Upper lobe of right lung (tissue), 1 donor: ENCODE measurements at regions of chr9 and their contacts with region 1.

Region 1: GRCh38 chr9:107465467-107466451 is 23.8 kb downstream of the KLF4 start:
- DNase-seq: peak; percentile 86
- ATAC-seq: peak; percentile 99
- H3K4me3 ChIP-seq: peak overlapping the region; percentile 64
- H3K27ac ChIP-seq: peak overlapping the region; percentile 24
- H3K4me1 ChIP-seq: peaks cover 10% of the 10 kb centered on the region
- H3K27me3 ChIP-seq: peaks cover 4% of the 10 kb centered on the region
- CTCF ChIP-seq: peak; percentile 89

Region 2: GRCh38 chr9:107637421-107638420 is 172.0 kb after region 1 on chr9:
- intact Hi-C with region 1: no loop called
- DNase-seq: peak; percentile 87
- ATAC-seq: peak; percentile 89
- H3K4me3 ChIP-seq: peak overlapping the region; percentile 45
- H3K27ac ChIP-seq: peak overlapping the region; percentile 93
- H3K4me1 ChIP-seq: peaks cover 18% of the 10 kb centered on the region
- H3K27me3 ChIP-seq: no peaks in the 10 kb centered on the region
- CTCF ChIP-seq: peak; percentile 27

Region 3: GRCh38 chr9:107907715-107908114 is 442.0 kb after region 1 on chr9:
- intact Hi-C with region 1: no loop called
- DNase-seq: no peak
- ATAC-seq: no peak
- H3K4me3 ChIP-seq: no peak overlapping the region
- H3K27ac ChIP-seq: no peak overlapping the region
- H3K4me1 ChIP-seq: no peaks in the 10 kb centered on the region
- H3K27me3 ChIP-seq: no peaks in the 10 kb centered on the region
- CTCF ChIP-seq: no peak

Region 4: DNA sequence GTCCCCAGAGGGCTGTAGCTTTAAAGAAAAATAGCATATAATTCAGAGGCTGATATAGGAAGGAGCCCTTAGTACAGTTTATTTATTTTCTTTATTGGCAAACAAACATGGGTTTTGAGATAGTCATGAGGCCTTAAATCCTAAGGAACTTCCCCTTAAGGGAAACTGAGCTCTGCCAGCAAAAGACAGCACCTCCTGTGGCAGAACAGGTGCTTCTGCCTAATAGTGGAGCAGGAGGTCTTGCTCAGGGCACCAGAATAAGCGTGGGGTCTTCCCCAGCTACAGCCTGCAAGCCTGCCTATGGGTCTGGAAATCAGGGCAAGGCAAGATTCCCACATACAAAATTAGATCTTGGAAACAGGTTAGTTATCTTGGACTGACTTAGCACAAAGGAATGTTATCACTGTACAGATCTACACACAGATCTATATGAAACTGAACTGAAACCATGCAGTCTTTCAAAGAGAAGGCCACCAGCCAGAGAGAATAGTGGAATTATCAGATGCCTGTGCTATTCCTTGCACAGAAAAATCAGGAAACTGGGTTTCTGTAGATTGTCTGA is 804.2 kb after region 1 on chr9:
- intact Hi-C with region 1: loop called (anchors 10 kb)
- DNase-seq: no peak
- ATAC-seq: no peak
- H3K4me3 ChIP-seq: no peak overlapping the region
- H3K27ac ChIP-seq: no peak overlapping the region
- H3K4me1 ChIP-seq: peaks cover 9% of the 10 kb centered on the region
- H3K27me3 ChIP-seq: no peaks in the 10 kb centered on the region
- CTCF ChIP-seq: no peak

Region 5: GRCh38 chr9:108565651-108566378 is 1100.1 kb after region 1 on chr9:
- intact Hi-C with region 1: loop called (anchors 10 kb)
- DNase-seq: no peak
- ATAC-seq: peak; percentile 95
- H3K4me3 ChIP-seq: no peak overlapping the region
- H3K27ac ChIP-seq: no peak overlapping the region
- H3K4me1 ChIP-seq: no peaks in the 10 kb centered on the region
- H3K27me3 ChIP-seq: peaks cover 3% of the 10 kb centered on the region
- CTCF ChIP-seq: peak; percentile 87